ENCODE measurements at regions of chr7 and their contacts with region 1.

Region 1: DNA sequence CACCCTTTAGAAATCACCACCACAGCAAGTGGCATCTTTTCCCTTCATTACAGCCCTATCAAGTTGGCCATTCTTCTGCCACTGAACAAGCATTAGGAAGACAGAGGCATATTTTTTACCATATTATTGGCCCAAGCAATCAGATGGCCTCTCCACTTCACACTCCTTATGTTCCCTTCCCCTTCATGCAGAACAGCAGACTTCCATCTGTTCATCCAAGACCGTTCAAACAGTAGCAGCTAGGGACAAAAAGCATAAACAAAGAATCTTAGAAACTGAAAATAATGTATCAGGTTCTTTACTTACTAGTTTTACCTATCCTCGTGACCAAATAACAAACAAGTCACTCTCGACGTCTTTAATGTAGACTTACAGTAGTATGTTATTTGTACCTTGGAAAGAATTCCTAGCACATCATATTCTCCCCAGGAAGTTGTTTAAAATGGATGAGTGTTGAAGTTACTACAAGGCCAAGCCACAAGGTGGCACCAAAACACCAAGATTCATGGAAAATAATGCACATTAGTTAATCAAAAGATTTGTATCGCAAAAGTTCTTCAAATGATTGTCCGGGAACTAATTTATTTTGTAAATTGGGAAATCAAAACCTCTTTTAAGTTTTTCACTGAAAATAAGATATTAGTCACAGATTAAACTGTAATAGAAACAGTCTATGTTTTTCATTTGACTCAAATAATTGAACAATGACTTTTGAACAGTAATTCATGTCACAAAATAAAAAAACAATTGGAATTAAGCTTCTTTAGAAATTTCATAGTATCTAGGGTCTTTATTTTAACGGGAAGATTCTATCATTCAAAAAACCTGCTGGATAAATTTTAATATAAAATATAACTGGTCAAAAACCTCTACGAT is 112.1 kb downstream of the VPS41 start:
- DNase-seq: peak; percentile 38 to 81 (median 51)
- H3K4me3 ChIP-seq: no peak overlapping the region
- H3K27ac ChIP-seq: no peak overlapping the region
- H3K4me1 ChIP-seq: no peaks in the 10 kb centered on the region
- H3K27me3 ChIP-seq: no peaks in the 10 kb centered on the region
- CTCF ChIP-seq: peak; percentile 70 to 86 (median 74)
- POLR2A ChIP-seq: no peak

Region 2: DNA sequence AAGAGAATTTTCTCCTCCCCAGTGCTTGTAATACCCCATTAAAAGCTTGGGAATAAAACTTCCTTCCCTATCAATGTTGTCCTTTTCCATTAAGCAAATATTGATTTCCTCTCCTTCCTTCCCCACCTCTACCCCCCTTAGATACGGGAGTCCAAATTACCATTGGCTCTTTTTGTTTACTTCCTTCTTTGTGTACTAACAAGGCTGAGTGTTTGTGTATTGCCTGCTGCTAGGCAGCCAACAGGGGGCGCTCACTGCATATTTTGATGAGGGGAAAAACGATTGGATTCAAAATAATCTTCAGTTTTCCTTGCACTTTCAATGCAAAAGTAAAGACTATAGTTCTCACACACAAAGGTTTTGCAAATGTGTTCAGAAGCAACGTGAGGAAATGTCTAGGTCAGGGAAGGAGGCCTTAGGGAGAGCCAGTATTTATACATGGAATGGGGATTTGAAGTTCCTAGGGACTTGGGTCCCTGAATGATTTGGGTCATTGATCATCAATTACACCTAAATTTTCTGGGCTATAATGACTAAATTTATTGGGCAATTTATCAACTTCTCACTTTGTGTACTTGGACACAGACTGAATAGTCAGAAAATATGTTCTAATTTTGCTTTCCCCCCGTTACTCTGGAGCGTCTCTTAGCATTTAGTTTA is 135.8 kb after region 1 on chr7:
- intact Hi-C with region 1: loop called (anchors 10 kb)
- DNase-seq: peak; percentile 54 to 74 (median 67)
- H3K4me3 ChIP-seq: no peak overlapping the region
- H3K27ac ChIP-seq: no peak overlapping the region
- H3K4me1 ChIP-seq: no peaks in the 10 kb centered on the region
- H3K27me3 ChIP-seq: no peaks in the 10 kb centered on the region
- CTCF ChIP-seq: peak; percentile 58 to 92 (median 68)
- POLR2A ChIP-seq: no peak

Region 3: DNA sequence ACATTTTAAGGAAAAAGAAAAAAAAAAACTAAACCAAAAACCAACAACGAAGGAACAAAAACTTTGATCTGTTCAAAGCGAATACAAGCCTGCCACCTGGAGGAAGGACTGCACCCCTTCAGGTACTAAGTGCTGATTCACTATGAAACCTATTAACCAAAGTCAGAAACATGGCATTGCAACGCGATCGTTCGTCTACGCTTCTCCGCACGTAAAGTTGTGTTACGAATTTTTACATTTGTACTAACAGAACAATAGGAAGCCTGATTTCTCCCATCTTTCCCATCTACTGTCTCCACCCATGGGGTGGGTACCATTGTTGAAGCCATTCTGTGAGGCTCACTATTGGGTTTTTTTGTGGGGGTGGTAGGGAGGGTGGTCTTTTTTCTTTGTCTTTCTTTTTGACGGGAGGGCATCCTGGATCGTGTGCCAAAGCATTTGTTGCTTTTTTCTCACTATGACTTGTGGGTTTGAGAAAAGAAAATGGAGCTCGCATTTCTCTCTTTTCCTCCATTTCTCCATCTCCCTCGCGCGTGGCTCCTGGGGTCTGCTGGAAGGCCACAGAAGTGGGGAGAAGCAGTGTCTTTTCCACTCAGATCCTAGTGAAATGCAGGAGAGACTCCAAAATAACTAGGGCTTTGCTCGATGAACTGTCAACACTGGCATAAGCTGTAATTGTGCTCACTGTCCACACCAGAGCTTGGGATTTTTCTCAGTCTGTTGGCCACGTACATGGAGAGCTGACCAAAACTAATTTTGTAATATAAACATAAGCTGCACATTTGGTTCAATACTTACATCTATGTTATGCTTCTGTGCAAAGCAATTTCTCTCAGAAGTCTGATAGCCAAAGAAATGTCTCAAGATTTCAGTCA is 668.4 kb after region 1 on chr7:
- intact Hi-C with region 1: loop called (anchors 10 kb)
- DNase-seq: peak; percentile 40 to 72 (median 61)
- H3K4me3 ChIP-seq: no peak overlapping the region
- H3K27ac ChIP-seq: no peak overlapping the region
- H3K4me1 ChIP-seq: peaks cover 0 to 6% of the 10 kb centered on the region in 2 donors
- H3K27me3 ChIP-seq: peaks cover 3% of the 10 kb centered on the region
- CTCF ChIP-seq: peak; percentile 61 to 80 (median 70)
- POLR2A ChIP-seq: no peak

Measured in adrenal gland (tissue), 19 donors.